ENCODE measurements at regions of chr3 and their contacts with region 1.

Region 1: DNA sequence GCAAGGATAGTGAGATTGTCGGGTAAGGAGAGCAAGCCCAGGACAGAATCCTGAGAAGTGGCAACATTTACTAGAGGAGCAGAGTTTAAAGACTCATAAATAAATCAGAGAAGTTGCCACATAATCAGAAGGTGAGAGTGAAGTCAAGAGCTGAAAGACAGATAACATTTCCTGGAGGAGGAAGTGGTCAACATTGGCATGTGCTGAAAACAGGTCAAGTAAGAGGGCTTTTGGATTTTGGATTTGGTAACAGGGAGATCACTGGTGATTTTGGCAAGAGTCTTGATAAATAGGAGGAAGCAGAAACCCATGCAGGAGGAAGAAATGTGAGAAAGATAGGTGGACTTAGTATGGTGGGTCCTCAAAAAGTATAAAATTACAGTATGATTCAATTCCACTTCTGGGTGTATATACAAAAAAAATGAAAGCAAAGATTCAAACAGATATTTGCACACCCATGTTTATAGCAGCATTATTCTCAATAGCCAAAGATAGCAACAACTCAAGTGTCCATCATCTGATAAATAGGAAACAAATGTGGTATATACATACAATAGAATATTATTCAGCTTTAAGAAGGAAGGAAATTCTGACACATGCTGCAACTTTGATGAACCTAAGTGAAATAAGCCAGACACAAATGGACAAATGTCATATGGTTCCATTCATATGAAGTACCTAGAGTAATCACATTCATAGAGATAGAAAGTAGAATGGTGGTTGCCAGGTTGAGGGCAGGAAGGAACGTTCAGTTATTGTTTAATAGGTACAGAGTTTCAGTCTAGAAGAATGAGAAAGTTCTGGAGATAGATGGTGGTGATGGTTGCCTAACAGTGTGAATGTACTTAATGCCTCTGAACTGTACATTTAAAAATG is 27.3 kb upstream of the MBNL1 start:
- DNase-seq: no peak
- H3K4me3 Mint-ChIP-seq: peak overlapping the region; percentile 41
- H3K27ac Mint-ChIP-seq: peak overlapping the region; percentile 97
- H3K4me1 Mint-ChIP-seq: peaks cover 53% of the 10 kb centered on the region
- H3K27me3 Mint-ChIP-seq: no peaks in the 10 kb centered on the region

Region 2: DNA sequence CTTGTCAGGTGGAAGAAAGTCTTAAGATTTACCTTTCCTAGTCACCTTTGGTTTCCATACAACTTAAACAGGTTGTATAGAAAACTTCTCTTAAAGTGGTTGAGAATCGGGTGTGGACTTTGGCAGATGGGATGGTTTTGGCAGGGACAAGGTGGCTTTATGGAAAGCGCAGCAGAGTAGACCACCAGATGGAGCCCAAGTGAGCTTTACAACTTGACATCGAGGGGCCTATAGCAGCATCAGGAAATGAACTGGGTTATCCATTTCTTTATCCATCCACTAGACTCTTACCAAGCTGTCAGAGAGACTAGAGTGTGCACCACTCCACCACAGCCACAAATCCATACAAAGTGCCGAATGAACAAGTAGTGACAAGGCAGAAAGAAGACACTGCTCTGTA is 57.9 kb before region 1 on chr3:
- CTCF ChIA-PET with region 1: interaction called, 7 read pairs
- POLR2A ChIA-PET with region 1: interaction called, 10 read pairs
- DNase-seq: peak; percentile 40
- H3K4me3 Mint-ChIP-seq: no peak overlapping the region
- H3K27ac Mint-ChIP-seq: no peak overlapping the region
- H3K4me1 Mint-ChIP-seq: peaks cover 31% of the 10 kb centered on the region
- H3K27me3 Mint-ChIP-seq: no peaks in the 10 kb centered on the region

Region 3: DNA sequence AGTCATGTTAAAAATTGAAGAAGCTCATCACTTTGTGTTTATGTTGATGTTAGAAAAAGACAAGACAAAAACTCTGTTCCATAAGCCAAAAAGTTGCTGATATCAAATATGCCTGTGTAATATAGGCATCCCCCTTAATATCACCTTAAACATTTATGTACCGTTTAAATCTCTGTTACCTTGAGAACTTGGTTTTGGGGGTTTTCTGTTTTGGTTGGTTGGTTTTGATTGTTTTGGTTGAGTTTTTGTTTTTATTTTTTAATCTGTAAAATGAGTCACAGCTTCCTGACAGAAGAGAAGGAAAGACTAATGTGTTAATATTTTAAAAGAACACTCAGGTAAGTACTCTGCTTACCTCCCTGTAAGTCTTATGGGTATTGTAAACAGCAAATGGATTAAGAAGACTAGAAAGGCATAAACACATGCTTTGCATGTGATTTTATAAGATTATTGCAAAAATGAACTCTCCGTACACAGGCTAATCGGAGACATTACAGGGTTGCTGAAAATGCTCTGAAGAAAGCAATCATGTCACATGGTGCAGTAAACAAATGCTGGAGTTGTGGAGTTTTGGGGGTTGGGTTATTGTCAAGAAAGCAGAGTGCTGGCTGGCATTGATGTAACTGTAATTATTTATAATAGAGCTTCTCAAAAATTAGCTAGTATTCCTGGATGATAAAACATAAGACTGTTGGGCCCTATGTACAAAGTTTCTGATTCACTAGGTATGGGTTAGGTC is 42.1 kb before region 1 on chr3:
- CTCF ChIA-PET with region 1: interaction called, 15 read pairs
- POLR2A ChIA-PET with region 1: interaction called, 139 read pairs
- DNase-seq: no peak
- H3K4me3 Mint-ChIP-seq: peak overlapping the region; percentile 67
- H3K27ac Mint-ChIP-seq: peak overlapping the region; percentile 96
- H3K4me1 Mint-ChIP-seq: peaks cover 70% of the 10 kb centered on the region
- H3K27me3 Mint-ChIP-seq: no peaks in the 10 kb centered on the region

Region 4: DNA sequence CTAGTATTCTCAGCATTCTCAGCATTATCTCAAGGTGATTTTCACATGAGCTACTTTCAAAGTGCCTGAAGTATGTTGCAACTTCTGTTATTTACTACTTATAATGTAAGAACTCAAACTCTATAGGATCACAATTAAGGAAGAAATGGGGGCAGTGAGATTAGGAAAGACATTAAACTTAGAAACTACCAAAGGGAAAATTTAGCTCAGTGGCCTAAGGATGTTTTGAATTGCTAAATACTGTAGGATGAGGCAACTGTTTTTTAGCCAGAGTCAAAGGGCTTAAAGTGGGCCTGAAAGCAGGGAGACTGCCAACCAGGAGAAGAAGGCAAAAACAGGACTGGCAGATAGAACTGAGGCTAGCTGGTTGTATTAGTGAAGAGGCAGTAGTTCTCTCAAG is 28.2 kb before region 1 on chr3:
- CTCF ChIA-PET with region 1: interaction called, 5 read pairs
- POLR2A ChIA-PET with region 1: interaction called, 29 read pairs
- DNase-seq: no peak
- H3K4me3 Mint-ChIP-seq: no peak overlapping the region
- H3K27ac Mint-ChIP-seq: no peak overlapping the region
- H3K4me1 Mint-ChIP-seq: peaks cover 51% of the 10 kb centered on the region
- H3K27me3 Mint-ChIP-seq: no peaks in the 10 kb centered on the region

Region 5: GRCh38 chr3:152268555-152269425 is 27.4 kb after region 1 on chr3 and contains the start of gene MBNL1:
- CTCF ChIA-PET with region 1: interaction called, 21 read pairs
- POLR2A ChIA-PET with region 1: interaction called, 268 read pairs
- DNase-seq: peak; percentile 90
- H3K4me3 Mint-ChIP-seq: peak within 1 kb of the TSS; percentile 92
- H3K27ac Mint-ChIP-seq: peak within 1 kb of the TSS; percentile 95
- H3K4me1 Mint-ChIP-seq: peaks cover 56% of the 10 kb centered on the region
- H3K27me3 Mint-ChIP-seq: no peaks in the 10 kb centered on the region
- total RNA-seq, gene MBNL1: 289 to 305 TPM

Region 6: GRCh38 chr3:152298393-152299242 is 57.2 kb after region 1 on chr3:
- CTCF ChIA-PET with region 1: interaction called, 3 read pairs
- POLR2A ChIA-PET with region 1: interaction called, 29 read pairs
- DNase-seq: peak; percentile 44
- H3K4me3 Mint-ChIP-seq: peak overlapping the region; percentile 56
- H3K27ac Mint-ChIP-seq: peak overlapping the region; percentile 67
- H3K4me1 Mint-ChIP-seq: peaks cover 69% of the 10 kb centered on the region
- H3K27me3 Mint-ChIP-seq: no peaks in the 10 kb centered on the region